CD4-positive, alpha-beta memory T cell (primary cell): ENCODE measurements at regions of chr6 and their contacts with region 1.

Region 1: DNA sequence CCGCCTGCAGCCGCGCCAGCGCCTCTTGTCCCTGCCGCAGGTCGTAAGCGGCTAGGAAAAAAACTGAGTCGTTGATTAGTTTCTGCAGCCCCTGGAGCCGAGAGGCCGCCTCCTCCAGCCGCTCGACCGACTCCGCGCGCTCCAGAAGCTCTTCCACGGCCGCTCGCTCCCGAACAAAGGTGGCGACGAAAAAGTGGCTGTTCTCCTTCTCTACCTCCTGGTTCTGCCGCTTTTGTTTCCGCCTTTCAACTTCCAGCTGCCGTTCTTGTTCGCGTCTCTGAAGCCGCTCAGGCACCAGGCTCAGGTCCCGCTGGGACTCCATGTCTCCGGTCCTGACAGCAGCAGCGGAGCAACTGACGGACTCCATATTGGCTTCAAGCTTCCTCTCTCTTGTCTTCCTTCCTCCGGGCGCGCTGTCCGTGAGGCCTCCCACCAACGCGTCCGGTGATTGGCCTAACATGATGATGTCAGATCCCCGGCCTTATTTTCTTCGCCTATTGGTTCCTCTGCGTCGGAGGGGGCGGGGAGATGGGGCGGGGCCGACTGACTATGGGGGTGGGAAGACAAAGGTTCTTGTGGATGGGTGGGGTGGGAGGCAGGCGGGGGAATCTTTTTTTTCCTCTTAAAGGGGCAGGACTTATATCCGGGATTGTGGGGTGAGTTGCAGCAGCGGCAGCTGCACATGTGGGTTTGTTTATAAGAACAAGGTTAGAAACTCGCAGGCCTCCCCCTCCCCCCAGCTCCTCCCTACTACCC is at the start of gene TBCC:
- DNase-seq: peak; percentile 91 to 98 (median 94)
- H3K4me3 ChIP-seq: peak within 1 kb of the TSS; percentile 82 to 99
- H3K4me3 Mint-ChIP-seq: peak within 1 kb of the TSS; percentile 100
- H3K27ac ChIP-seq: peak within 1 kb of the TSS; percentile 88
- H3K27ac Mint-ChIP-seq: peak within 1 kb of the TSS; percentile 94 to 100 (median 100)
- H3K4me1 ChIP-seq: peaks cover 38% of the 10 kb centered on the region
- H3K4me1 Mint-ChIP-seq: peaks cover 18 to 50% (median 37%) of the 10 kb centered on the region in 4 donors
- H3K27me3 ChIP-seq: no peaks in the 10 kb centered on the region
- H3K27me3 Mint-ChIP-seq: no peaks in the 10 kb centered on the region
- total RNA-seq, gene TBCC: 57.4 to 64.4 TPM

Region 2: DNA sequence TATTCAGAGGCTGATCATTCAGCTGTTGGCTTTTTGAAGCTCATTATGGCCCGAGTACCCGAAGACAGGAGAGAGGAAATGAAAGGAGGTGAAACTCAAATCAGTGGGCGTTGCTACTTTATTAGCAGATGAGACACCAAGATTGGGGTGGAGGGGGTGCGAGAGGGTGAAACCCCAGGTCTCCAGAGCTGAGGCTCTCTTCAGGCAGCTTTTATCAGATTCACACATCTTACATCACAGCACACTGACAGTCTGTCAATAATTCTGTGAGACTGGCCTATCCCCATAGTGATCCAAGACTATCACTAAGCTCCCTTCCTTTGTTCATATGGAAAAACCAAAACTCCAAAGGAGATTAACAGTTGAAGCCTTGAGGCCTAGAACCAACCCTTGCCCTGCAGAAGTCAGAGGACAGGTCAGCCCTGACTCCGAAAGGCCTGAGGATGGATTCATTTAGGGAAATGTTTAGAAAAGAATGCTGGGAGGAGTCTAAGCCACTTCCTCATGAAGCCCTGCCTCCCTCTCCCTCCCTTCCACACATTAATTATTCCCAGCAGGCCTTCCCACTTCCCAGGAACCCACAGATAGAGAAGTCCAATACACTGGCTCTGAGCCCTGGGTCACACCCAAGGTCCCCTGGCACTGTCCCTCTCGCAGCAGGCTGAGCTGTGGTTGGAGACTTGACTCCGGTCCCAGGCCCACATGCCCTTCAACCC is 317.4 kb before region 1 on chr6:
- CTCF ChIA-PET with region 1: no interaction called
- POLR2A ChIA-PET with region 1: no interaction called
- intact Hi-C with region 1: no loop called
- DNase-seq: peak; percentile 56 to 85 (median 62)
- H3K4me3 ChIP-seq: peak overlapping the region in 1 of 2 donors; percentile 25
- H3K4me3 Mint-ChIP-seq: peak overlapping the region; percentile 44 to 82 (median 66)
- H3K27ac ChIP-seq: peak overlapping the region; percentile 54
- H3K27ac Mint-ChIP-seq: peak overlapping the region; percentile 72 to 98 (median 93)
- H3K4me1 ChIP-seq: peaks cover 78% of the 10 kb centered on the region
- H3K4me1 Mint-ChIP-seq: peaks cover 54 to 77% (median 62%) of the 10 kb centered on the region in 4 donors
- H3K27me3 ChIP-seq: no peaks in the 10 kb centered on the region
- H3K27me3 Mint-ChIP-seq: no peaks in the 10 kb centered on the region

Region 3: DNA sequence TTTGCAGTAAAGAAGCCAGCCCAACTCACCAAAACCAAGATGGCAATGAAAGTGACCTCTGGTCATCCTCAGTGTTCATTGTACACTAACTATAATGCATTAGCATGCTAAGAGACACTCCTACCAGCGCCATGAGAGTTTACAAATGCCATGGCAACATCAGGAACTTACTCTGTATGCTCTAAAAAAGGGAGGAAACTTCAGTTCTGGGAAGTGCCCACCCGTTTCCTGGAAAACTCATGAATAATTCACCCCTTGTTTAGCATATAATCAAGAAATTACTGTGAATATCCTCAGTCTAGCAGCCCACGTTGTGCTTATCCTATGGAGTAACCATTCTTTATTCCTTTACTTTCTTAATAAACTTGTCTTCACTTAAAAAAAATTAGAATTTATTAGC is 274.7 kb before region 1 on chr6:
- CTCF ChIA-PET with region 1: no interaction called
- POLR2A ChIA-PET with region 1: no interaction called
- intact Hi-C with region 1: no loop called
- DNase-seq: no peak
- H3K4me3 ChIP-seq: no peak overlapping the region
- H3K4me3 Mint-ChIP-seq: no peak overlapping the region
- H3K27ac ChIP-seq: no peak overlapping the region
- H3K27ac Mint-ChIP-seq: no peak overlapping the region
- H3K4me1 ChIP-seq: no peaks in the 10 kb centered on the region
- H3K4me1 Mint-ChIP-seq: no peaks in the 10 kb centered on the region
- H3K27me3 ChIP-seq: no peaks in the 10 kb centered on the region
- H3K27me3 Mint-ChIP-seq: no peaks in the 10 kb centered on the region

Region 4: DNA sequence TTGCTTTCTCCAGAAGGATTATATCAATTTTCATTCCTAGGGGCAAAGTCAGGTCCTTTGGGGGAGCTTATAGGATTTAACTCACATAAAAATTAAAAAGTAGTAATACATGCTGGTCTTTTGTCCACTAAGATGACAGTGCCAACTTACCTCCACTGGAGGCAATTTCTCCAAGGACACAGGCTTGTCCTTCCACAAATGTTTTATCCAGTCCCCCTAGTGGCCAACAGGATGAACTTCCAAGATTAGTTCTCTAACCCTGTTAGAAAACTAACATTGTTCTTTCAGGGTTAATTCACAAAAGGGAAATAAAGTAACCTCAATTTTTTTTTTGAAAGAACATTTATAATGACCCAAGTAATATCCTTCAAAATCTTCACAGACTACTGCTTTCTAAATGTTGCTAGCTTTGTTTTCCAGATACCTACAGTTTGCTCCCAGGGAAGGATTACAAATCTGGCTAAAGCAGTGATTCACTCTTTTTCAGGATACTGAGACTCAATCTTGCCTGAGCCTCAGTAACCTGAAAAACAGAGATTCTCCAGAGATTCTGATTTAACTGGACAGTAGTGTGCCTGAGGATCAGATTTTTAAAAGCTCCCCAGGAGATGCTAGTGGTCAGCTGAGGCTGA is 213.7 kb before region 1 on chr6:
- CTCF ChIA-PET with region 1: no interaction called
- POLR2A ChIA-PET with region 1: no interaction called
- intact Hi-C with region 1: no loop called
- DNase-seq: peak in 4 of 5 donors; percentile 36 to 48 (median 42)
- H3K4me3 ChIP-seq: no peak overlapping the region
- H3K4me3 Mint-ChIP-seq: no peak overlapping the region
- H3K27ac ChIP-seq: no peak overlapping the region
- H3K27ac Mint-ChIP-seq: no peak overlapping the region
- H3K4me1 ChIP-seq: no peaks in the 10 kb centered on the region
- H3K4me1 Mint-ChIP-seq: peaks cover 0 to 3% (median 0%) of the 10 kb centered on the region in 4 donors
- H3K27me3 ChIP-seq: no peaks in the 10 kb centered on the region
- H3K27me3 Mint-ChIP-seq: no peaks in the 10 kb centered on the region

Region 5: DNA sequence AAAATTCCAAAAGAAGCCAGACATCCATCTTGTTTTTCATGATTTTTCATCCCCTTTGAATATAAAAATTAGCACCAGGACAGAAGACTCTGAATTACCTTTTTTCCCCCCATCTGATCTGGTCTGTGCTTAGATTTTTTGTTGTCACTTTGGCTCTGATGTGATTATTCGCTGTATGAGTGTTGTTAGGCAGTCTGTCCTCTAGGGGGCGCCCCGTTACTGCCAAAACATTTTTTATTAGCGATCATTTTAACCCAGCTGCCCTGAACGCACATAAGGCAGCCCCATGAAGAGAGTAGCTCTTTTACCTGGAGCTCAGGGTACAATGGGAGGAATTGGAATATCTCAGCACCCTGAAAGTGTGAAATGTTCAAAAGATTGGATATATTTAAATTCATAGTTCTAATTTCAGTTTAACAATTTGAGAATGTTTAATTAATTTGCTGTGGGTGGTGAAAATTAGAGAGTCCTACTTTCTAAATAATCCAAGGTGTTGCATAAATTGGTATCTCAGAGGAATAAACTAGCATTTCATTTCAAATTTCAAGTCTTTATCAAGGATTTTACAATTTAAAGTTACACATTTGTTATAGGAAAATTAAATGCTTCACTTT is 84.2 kb before region 1 on chr6:
- CTCF ChIA-PET with region 1: interaction called, 3 read pairs
- POLR2A ChIA-PET with region 1: interaction called, 14 read pairs
- intact Hi-C with region 1: no loop called
- DNase-seq: peak; percentile 80 to 84 (median 84)
- H3K4me3 ChIP-seq: no peak overlapping the region
- H3K4me3 Mint-ChIP-seq: no peak overlapping the region
- H3K27ac ChIP-seq: no peak overlapping the region
- H3K27ac Mint-ChIP-seq: peak overlapping the region in 4 of 7 donors; percentile 0 to 15 (median 2)
- H3K4me1 ChIP-seq: no peaks in the 10 kb centered on the region
- H3K4me1 Mint-ChIP-seq: peaks cover 0 to 2% (median 0%) of the 10 kb centered on the region in 4 donors
- H3K27me3 ChIP-seq: no peaks in the 10 kb centered on the region
- H3K27me3 Mint-ChIP-seq: no peaks in the 10 kb centered on the region

Region 6: DNA sequence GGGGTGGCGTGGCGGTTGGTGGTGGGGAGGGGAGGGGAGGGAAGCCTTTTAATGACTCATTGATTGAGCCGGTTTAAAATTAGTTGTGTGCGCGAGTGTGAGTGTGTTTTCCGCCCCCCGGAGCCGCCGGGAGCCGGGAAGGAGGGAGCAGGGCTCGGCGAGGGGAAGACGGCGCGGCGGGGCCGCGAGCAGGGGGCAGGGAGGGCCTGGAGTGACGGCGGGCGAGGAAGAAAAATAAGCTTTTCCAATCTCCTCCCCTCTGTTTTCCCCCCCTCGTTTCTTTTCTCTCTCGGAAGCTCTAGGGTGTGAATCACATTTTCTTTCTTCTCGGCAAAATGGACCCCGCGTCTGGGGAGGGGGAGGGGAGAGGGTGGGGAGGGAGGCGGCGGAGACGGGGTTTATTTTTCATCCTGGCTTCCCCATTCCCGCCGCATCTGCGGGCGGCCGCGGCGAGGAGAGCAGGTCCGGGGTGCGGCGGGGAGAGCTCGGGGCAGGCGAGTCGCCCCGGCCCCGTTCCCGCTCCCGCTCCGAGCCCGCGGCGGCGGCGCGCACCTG is 36.8 kb after region 1 on chr6:
- CTCF ChIA-PET with region 1: interaction called, 6 read pairs
- POLR2A ChIA-PET with region 1: interaction called, 1,692 read pairs
- intact Hi-C with region 1: loop called (anchors 1 kb)
- DNase-seq: peak; percentile 82 to 87 (median 82)
- H3K4me3 ChIP-seq: peak overlapping the region; percentile 80 to 88
- H3K4me3 Mint-ChIP-seq: peak overlapping the region; percentile 95 to 100 (median 99)
- H3K27ac ChIP-seq: peak overlapping the region; percentile 100
- H3K27ac Mint-ChIP-seq: peak overlapping the region in 6 of 7 donors; percentile 100
- H3K4me1 ChIP-seq: peaks cover 68% of the 10 kb centered on the region
- H3K4me1 Mint-ChIP-seq: peaks cover 20 to 46% (median 28%) of the 10 kb centered on the region in 4 donors
- H3K27me3 ChIP-seq: no peaks in the 10 kb centered on the region
- H3K27me3 Mint-ChIP-seq: peaks cover 0 to 1% of the 10 kb centered on the region in 2 donors

Region 7: GRCh38 chr6:42813906-42814444 is 68.1 kb after region 1 on chr6:
- CTCF ChIA-PET with region 1: no interaction called
- POLR2A ChIA-PET with region 1: interaction called, 33 read pairs
- intact Hi-C with region 1: no loop called
- DNase-seq: no peak
- H3K4me3 ChIP-seq: no peak overlapping the region
- H3K4me3 Mint-ChIP-seq: peak overlapping the region in 1 of 8 donors; percentile 40
- H3K27ac ChIP-seq: no peak overlapping the region
- H3K27ac Mint-ChIP-seq: peak overlapping the region in 5 of 7 donors; percentile 47 to 78 (median 65)
- H3K4me1 ChIP-seq: peaks cover 3% of the 10 kb centered on the region
- H3K4me1 Mint-ChIP-seq: peaks cover 10 to 19% (median 14%) of the 10 kb centered on the region in 4 donors
- H3K27me3 ChIP-seq: no peaks in the 10 kb centered on the region
- H3K27me3 Mint-ChIP-seq: no peaks in the 10 kb centered on the region

Region 8: DNA sequence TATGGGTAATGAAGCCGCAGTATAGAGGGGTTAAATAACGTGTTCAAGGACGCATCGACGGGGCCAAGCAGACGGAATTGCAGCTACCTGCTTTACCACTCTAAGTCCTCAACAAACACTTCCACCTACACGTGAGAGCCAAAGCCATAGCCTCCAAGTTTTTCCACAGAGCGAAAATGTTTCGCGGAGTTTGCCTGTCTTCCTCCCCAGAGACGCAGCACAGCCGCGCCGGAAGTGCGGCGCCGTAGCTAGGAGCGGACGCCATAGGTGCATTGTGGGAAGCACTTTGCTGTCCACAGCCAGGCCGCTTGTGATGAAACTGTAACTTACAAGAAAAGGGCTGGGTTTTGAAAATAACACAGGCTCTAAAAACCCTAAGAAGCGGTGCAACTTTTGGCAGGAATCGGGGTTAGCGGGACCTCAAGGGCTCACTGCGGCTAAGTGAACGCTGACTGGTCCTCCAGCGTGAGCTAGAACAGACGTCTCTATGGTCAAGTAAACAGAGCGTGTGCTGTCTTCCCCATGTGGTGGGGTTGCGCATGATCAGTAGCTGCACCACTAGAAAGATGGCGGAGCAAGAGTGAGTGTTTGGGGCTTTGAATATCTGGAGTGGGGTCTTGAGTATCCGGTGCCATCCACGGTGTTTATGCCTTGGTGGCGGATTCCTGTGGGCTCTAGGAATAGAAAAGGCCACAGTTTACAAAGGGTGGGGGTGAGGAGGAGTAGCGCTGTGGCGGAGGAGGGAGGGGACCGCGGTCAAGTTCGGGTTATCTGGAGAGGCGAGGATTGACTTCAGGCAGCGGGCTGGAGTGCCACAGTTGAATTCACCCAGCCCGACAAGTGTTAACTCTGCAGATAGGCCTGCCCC is 133.7 kb after region 1 on chr6 and contains the start of gene RPL7L1:
- CTCF ChIA-PET with region 1: interaction called, 3 read pairs
- POLR2A ChIA-PET with region 1: interaction called, 77 read pairs
- intact Hi-C with region 1: loop called (anchors 1 kb)
- DNase-seq: peak; percentile 88 to 93 (median 91)
- H3K4me3 ChIP-seq: peak within 1 kb of the TSS; percentile 77 to 84
- H3K4me3 Mint-ChIP-seq: peak within 1 kb of the TSS; percentile 94 to 99 (median 96)
- H3K27ac ChIP-seq: peak within 1 kb of the TSS; percentile 93
- H3K27ac Mint-ChIP-seq: peak within 1 kb of the TSS; percentile 97 to 100 (median 99)
- H3K4me1 ChIP-seq: peaks cover 23% of the 10 kb centered on the region
- H3K4me1 Mint-ChIP-seq: peaks cover 7 to 39% (median 25%) of the 10 kb centered on the region in 4 donors
- H3K27me3 ChIP-seq: no peaks in the 10 kb centered on the region
- H3K27me3 Mint-ChIP-seq: no peaks in the 10 kb centered on the region
- total RNA-seq, gene RPL7L1: 89.2 to 89.8 TPM

Region 9: GRCh38 chr6:43059168-43060033 is 313.5 kb after region 1 on chr6 and contains the starts of genes KLC4 and MRPL2:
- CTCF ChIA-PET with region 1: no interaction called
- POLR2A ChIA-PET with region 1: interaction called, 9 read pairs
- intact Hi-C with region 1: loop called (anchors 1 kb)
- DNase-seq: peak; percentile 95 to 99 (median 96)
- H3K4me3 ChIP-seq: peak within 1 kb of the TSS; percentile 84 to 87
- H3K4me3 Mint-ChIP-seq: peak within 1 kb of the TSS; percentile 94 to 99 (median 97)
- H3K27ac ChIP-seq: peak within 1 kb of the TSS; percentile 91
- H3K27ac Mint-ChIP-seq: peak within 1 kb of the TSS; percentile 97 to 100 (median 99)
- H3K4me1 ChIP-seq: peaks cover 24% of the 10 kb centered on the region
- H3K4me1 Mint-ChIP-seq: peaks cover 27 to 52% (median 35%) of the 10 kb centered on the region in 4 donors
- H3K27me3 ChIP-seq: no peaks in the 10 kb centered on the region
- H3K27me3 Mint-ChIP-seq: no peaks in the 10 kb centered on the region
- total RNA-seq, gene KLC4: 51.6 to 57.0 TPM
- total RNA-seq, gene MRPL2: 55.3 to 56.5 TPM

Region 10: DNA sequence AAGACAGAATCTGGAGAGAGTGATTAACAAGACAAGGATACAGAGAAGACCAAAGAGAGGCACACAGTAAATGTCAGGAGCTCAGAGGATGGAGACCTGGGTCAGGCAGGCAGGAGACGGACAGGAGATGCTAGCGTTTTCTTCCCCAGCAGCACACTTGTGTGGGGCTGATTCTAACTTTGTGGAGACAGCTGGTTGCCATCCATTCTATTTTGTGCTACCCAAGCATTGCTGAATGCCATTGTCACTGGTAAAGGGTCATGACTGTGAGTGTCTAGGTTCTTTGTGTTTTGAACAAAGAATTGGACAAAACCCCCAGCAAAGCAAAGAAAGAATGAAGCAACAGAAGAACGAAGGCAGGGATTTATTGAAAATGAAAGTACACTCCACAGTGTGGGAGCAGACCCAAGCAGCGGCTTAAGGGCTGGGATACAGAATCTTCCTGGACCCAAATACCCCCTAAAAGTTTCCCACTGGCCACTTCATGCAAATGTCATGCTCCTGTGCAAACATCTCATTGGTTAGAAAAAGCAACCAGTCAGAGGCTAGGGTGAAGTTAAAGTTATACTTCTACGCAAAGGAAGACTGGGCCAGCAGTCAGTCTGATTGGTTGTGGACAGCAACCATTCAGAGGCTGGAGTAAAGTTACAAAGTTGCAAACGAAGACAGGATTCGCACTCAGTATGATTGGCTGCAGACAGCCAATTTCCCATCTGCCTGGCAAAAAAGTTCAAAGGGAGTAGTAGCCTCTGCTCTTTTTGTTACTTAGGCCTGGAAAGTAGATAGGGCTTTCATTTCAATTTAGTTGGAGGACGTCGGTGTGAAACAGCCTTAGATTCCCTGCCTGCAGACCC is 347.8 kb after region 1 on chr6:
- CTCF ChIA-PET with region 1: no interaction called
- POLR2A ChIA-PET with region 1: no interaction called
- intact Hi-C with region 1: no loop called
- DNase-seq: peak in 1 of 5 donors; percentile 4
- H3K4me3 ChIP-seq: no peak overlapping the region
- H3K4me3 Mint-ChIP-seq: peak overlapping the region; percentile 12 to 77 (median 58)
- H3K27ac ChIP-seq: no peak overlapping the region
- H3K27ac Mint-ChIP-seq: peak overlapping the region in 3 of 7 donors; percentile 18 to 88 (median 41)
- H3K4me1 ChIP-seq: peaks cover 15% of the 10 kb centered on the region
- H3K4me1 Mint-ChIP-seq: peaks cover 12 to 22% (median 15%) of the 10 kb centered on the region in 4 donors
- H3K27me3 ChIP-seq: no peaks in the 10 kb centered on the region
- H3K27me3 Mint-ChIP-seq: no peaks in the 10 kb centered on the region